ENCODE measurements at regions of chr2 and their contacts with region 1.

Region 1: DNA sequence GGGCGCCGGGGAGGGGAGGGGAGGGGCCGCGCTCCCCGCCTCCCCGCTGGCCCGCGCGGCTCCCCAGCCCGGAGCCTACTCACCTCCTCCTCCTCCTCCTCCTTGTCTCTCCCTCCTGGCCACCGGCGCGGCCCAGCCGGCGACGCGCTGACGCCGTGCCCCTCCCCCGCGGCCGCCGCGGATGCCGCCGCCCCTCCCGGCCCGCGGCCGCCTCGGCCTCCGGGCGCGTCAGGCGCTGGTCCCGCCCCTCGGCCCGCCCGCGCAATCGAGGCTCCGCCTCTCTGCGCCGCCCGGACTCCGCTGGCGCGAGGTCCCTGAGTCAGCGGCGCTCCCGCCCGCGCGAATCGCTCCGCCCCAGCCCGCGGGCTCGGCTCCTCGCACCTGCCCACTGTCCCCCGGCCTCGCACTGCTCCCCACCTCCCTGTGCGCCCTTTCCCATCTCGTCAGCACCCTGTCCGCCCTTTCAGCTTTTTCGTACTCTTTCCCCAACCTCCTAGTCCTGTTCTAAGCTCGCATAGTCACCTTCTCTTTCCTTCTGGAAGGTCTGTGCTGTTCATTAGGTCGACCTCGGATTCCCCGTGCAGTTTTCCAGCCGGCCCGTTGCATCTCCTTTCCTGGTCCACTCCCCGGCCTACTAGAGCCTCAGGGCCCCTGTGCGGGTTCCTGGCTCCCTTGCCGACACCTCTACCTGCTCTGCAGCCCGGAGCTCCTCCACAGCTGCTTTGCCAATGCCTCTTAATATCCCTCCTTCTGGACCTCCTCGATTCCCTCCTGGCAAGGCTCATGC is 187.4 kb downstream of the ZEB2 start:
- DNase-seq: peak; percentile 93
- H3K4me3 ChIP-seq: peak overlapping the region; percentile 97
- H3K27ac ChIP-seq: peak overlapping the region; percentile 68
- H3K4me1 ChIP-seq: peaks cover 26% of the 10 kb centered on the region
- CTCF ChIP-seq: no peak

Region 2: DNA sequence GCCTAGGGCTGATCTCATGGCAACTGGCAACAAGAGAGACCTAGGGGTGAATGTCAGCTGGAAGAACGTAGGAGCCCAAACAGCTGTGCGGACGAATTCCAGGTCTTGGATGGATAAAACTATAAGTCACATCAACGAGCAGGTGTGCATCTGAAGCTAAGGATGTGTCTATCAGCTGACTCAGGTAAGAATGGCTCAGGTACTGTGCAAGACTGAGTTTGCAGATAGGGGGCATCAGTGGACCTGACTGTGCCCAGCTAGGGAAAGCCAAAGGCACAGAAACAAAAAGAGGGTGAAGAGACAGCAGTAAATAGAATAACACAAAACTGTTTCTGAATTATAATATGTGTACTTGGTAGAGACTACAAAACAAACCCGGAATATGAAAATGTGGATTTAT is 169.9 kb before region 1 on chr2:
- CTCF ChIA-PET with region 1: no interaction called
- POLR2A ChIA-PET with region 1: interaction called, 3 read pairs
- intact Hi-C with region 1: loop called (anchors 10 kb)
- DNase-seq: peak; percentile 65
- H3K4me3 ChIP-seq: no peak overlapping the region
- H3K27ac ChIP-seq: no peak overlapping the region
- H3K4me1 ChIP-seq: no peaks in the 10 kb centered on the region
- CTCF ChIP-seq: peak; percentile 83

Region 3: DNA sequence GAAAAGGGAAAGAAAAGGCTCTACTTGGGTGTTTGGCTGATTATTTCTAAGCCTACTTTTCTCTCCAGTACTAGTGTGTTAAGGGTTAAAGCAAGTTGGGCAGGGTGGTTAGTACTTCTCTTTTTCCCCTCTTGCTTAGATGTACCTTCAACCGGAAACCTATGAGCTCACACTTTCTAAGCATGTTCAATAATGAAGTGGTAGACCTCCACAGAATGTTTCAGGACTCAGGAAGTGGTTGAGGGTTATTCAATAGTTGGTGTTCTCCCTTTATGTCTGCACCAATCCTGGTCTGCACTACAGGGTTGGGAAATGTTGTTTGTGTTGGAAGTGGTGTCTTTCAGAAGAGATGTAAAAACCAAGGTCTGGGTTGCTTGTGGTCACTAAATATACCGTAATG is 50.3 kb after region 1 on chr2:
- CTCF ChIA-PET with region 1: no interaction called
- POLR2A ChIA-PET with region 1: no interaction called
- intact Hi-C with region 1: no loop called
- DNase-seq: peak; percentile 18
- H3K4me3 ChIP-seq: no peak overlapping the region
- H3K27ac ChIP-seq: no peak overlapping the region
- H3K4me1 ChIP-seq: no peaks in the 10 kb centered on the region
- CTCF ChIP-seq: no peak

Region 4: DNA sequence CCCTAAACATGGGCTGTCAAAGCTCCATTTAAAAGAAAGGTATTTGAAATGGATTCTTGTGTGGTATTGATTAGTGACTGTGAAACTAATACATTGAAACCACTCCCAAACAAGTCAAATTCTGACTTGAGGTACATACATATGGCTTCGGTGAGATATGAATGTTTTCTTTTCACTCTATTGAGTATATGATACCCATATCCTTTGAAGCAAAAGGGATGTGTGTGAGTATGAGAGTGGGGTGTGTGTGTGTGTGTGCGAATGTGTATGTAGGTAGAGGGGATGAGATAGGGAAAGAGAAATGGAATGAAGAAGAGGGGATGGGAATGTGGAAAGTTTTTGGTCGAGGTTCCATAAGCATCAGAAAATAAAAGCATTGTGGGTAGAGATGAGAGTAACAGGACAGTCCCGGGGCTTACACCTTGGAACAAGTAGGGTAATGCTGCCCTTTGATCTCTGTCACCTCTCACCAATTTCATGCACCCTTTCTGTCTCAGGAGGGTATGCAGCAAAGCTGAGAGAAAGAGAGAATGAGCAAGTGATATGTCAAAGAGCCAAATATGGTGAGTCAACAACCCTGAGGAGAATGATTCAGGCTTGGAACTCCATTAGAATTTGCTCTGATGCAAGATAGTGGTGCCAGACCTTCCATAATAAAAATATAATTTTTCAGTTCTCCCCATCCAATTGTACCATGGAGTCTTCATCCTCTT is 251.3 kb after region 1 on chr2:
- CTCF ChIA-PET with region 1: no interaction called
- POLR2A ChIA-PET with region 1: no interaction called
- intact Hi-C with region 1: loop called (anchors 10 kb)
- DNase-seq: no peak
- H3K4me3 ChIP-seq: no peak overlapping the region
- H3K27ac ChIP-seq: no peak overlapping the region
- H3K4me1 ChIP-seq: peaks cover 42% of the 10 kb centered on the region
- CTCF ChIP-seq: no peak

Region 5: GRCh38 chr2:145411493-145411892 is 1078.9 kb after region 1 on chr2:
- CTCF ChIA-PET with region 1: no interaction called
- POLR2A ChIA-PET with region 1: no interaction called
- intact Hi-C with region 1: loop called (anchors 5 kb)
- DNase-seq: peak; percentile 97
- H3K4me3 ChIP-seq: peak overlapping the region; percentile 43
- H3K27ac ChIP-seq: peak overlapping the region; percentile 99
- H3K4me1 ChIP-seq: peaks cover 41% of the 10 kb centered on the region
- CTCF ChIP-seq: no peak

Measured in OCI-LY7 (cell line).